ENCODE measurements at regions of chr15 and their contacts with region 1.

Region 1: DNA sequence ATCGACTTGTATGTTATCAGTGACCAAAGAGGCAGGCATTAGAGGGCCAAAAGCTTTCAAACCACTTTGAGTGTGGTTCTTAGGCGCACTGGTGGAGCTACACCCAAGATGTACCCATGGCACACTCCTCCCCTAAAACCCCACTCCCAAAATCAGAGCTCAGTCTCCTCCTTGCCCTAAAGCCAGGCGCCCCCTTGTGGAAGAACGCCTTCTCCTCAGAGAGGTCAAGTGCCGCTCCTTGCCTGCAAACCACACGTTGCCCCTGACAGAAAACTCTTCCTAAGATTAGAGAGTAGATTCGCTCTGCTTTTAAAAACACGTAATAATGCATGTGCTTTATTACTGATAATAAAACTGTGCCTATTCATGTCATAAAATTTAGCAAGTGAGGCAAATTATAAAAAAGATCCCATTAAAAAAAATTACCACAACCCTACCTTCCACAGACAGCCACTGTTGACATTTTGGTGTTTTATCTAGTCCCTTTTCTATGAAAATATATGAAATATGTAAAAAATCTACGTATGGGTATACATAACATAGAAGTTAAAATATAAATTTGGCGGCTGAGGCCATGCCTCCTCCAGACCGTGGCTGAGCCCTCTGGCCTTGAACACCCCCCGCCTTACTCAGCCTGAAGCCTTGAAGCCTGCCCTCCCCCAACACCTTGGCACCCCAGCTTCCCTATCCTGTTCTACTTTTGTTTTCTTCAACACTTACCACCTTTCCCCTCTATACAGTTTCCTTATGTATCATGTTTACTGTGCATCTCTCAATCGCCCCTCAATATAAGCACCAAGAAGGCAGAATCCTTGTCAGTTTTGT is 33.5 kb downstream of the BCL2L10 start:
- DNase-seq: peak; percentile 87
- H3K4me3 Mint-ChIP-seq: no peak overlapping the region
- H3K27ac Mint-ChIP-seq: no peak overlapping the region
- H3K4me1 Mint-ChIP-seq: peaks cover 7% of the 10 kb centered on the region
- H3K27me3 Mint-ChIP-seq: no peaks in the 10 kb centered on the region
- CTCF ChIP-seq: peak; percentile 78

Region 2: DNA sequence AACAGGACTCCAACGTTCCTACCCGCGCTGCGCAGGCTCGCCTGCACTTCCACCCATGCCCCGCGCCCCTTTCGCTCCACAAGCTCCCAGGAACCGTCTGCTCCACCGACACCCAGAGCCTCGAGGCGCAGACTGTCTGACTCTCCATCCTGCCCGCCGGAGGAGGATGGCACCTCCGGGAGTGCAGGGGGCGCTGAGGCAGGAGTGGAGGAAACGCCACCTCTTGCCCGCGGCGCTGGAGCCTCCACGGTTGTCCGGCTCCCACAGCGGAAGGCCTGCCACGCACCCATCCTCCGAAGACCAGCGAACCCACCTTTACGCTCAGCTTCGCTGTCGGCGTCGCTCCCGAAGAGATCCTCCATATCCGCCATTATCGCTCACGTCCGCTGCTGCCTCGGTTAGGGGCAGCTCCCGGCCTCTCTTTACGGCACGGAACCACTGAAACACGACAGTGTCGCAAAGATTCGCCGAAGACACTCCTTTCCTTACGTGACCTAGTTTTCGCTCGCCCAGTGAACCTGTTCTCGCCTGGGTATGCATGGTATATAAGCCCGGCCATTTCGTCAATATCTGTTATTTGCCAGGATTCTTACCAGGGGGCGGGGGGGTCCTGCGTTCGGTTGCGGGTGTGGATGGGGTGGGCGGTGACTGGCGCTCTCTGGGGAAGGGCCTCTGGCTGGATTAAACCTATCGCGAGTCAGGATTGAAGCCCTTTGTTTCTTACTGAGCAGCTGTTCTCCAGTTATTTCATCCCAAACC is 107.5 kb before region 1 on chr15 and contains the start of gene LEO1:
- CTCF ChIA-PET with region 1: interaction called, 10 read pairs
- intact Hi-C with region 1: no loop called
- DNase-seq: peak; percentile 84
- H3K4me3 Mint-ChIP-seq: peak within 1 kb of the TSS; percentile 98
- H3K27ac Mint-ChIP-seq: peak within 1 kb of the TSS; percentile 97
- H3K4me1 Mint-ChIP-seq: no peaks in the 10 kb centered on the region
- H3K27me3 Mint-ChIP-seq: no peaks in the 10 kb centered on the region
- CTCF ChIP-seq: no peak
- total RNA-seq, gene LEO1: 21.3 and 22.5 TPM in 2 replicates

Measured in Calu3 (cell line).